ENCODE measurements at regions of chr6 and their contacts with region 1.

Region 1: DNA sequence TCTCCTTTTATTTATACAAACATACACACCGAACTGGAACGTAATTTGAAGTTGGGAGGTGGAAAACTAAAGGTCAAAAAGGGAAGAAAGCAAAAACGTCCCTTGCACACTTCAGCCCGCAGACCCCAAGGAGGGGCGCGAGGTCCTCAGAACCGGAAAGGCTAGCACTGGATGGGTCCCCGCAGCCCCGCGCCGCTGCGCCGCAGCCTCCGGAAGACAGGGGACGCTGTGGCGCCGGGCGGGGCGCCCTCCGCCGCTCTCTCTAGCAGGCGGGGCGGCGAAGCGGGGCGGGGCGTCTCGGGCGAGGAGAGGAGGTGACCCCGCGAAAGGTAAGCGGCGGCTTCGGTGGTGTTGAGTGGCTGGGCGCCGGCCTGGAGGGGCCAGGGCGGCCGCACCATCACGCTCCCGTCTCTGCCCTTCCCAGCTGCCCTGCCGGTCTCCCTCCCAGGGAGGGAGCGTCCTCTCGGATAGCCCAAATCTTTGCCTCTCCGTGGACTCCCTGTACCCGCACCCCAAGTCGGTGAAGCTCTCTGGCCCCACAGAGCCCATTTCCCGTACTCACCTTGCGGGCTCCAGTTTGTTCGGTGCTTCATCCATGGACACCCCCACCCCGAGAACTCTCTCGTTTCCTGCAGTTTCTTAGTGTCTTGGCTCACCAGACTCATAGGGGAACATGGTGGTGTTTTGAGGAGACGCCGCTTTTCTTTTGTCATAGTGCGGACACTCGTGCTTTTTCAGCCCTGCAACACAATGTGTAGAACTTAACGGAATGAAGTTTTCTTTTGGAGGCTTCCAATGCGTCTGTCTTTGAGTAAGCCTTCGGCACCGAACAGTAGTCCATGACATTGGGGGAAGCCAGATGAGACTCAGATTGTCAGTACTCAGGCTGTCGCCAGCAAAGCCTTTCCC is at the start of gene SMIM8:
- DNase-seq: peak; percentile 81 to 87
- ATAC-seq: peak; percentile 99 to 100 (median 100)
- H3K4me3 ChIP-seq: peak within 1 kb of the TSS; percentile 63 to 98 (median 88)
- H3K27ac ChIP-seq: peak within 1 kb of the TSS; percentile 1 to 90 (median 84)
- H3K4me1 ChIP-seq: peaks cover 0 to 8% (median 3%) of the 10 kb centered on the region in 9 donors
- H3K27me3 ChIP-seq: peaks cover 0 to under 1% (median 0%) of the 10 kb centered on the region in 7 donors
- CTCF ChIP-seq: peak; percentile 96 to 100 (median 99)
- total RNA-seq, gene SMIM8: 8.6 to 13.8 (median 10.8) TPM

Region 2: DNA sequence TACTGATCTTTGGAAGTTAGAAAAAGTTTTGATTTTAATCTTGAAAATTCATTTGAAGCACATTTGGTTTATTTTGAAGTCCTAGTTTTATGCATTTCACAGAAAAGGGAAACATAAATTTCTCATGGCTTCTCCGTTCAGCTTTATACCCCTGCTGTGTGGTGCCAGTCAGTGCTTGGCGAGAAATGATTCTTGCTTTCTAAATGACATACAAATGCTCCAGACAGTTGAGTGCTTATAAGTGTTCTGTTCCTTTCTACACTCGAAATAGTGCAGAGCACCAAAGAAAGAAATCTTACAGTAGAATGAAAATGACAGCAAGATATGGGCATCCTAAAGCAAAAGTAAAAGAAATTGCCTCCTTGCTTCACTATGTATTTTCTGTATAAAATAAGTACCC is 176.2 kb before region 1 on chr6:
- intact Hi-C with region 1: loop called in 1 of 10 experiments (anchors 10 kb)
- DNase-seq: no peak
- ATAC-seq: no peak
- H3K4me3 ChIP-seq: no peak overlapping the region
- H3K27ac ChIP-seq: no peak overlapping the region
- H3K4me1 ChIP-seq: peaks cover 0 to 5% (median 3%) of the 10 kb centered on the region in 9 donors
- H3K27me3 ChIP-seq: no peaks in the 10 kb centered on the region
- CTCF ChIP-seq: no peak

Region 3: DNA sequence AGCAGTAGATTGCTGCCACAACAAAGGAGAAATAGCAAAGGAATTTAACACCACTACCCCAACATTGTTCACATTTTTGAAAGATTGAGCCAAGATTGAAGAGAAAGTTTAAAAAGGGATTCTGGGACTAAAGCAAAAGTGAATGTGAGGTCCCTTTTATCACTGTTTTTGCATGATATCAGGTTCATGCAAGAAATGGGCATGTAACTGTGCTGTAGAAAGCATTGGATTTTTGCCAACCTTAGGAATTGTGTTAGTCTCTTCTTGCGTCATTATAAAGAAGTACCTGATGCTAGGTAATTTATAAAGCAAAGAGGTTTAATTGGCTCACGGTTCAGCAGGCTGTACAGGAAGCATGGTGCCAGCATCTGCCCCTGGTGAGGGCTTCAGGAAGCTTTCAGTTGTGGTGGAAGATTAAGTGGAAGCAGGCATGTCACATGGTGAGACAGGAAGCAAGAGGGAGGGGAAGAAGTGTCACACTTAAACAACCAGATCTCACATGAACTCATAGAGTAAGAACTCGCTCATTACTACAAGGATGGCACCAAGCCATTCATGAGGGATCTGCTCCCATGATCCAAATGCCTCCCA is 11.1 kb after region 1 on chr6:
- intact Hi-C with region 1: no loop called
- DNase-seq: peak in 1 of 2 donors; percentile 42
- ATAC-seq: peak in 7 of 8 donors; percentile 62 to 83 (median 77)
- H3K4me3 ChIP-seq: peak overlapping the region in 2 of 10 donors; percentile 2 to 5
- H3K27ac ChIP-seq: peak overlapping the region in 6 of 10 donors; percentile 26 to 69 (median 52)
- H3K4me1 ChIP-seq: peaks cover 3 to 39% (median 26%) of the 10 kb centered on the region in 9 donors
- H3K27me3 ChIP-seq: no peaks in the 10 kb centered on the region
- CTCF ChIP-seq: no peak